ENCODE measurements at regions of chr12 and their contacts with region 1.

Region 1: GRCh38 chr12:93061472-93062419 is 132.7 kb upstream of the EEA1 start:
- DNase-seq: no peak
- H3K4me3 ChIP-seq: no peak overlapping the region
- H3K27ac ChIP-seq: no peak overlapping the region
- H3K4me1 ChIP-seq: no peaks in the 10 kb centered on the region
- H3K27me3 ChIP-seq: no peaks in the 10 kb centered on the region
- CTCF ChIP-seq: no peak

Region 2: DNA sequence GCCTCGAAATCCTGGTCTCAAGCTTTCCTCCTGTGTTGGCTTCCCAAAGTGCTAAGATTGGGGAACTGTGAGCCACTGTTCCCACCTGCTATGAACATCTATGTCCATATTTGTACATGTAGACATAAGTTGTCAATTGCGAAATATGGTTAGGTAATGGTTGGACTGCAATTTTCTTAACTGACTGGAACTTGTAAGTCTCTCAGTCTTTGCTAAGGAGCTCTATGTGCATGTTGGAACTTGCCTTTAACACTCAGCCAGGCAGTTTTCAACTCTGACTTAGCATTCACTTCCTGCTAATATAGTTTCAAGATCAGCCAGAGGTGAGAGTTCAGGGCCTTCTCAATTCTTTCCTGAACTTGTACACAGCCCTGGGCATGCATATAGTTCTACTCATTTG is 88.1 kb before region 1 on chr12:
- CTCF ChIA-PET with region 1: no interaction called
- POLR2A ChIA-PET with region 1: no interaction called
- intact Hi-C with region 1: no loop called
- DNase-seq: peak in 1 of 2 experiments; percentile 65
- H3K4me3 ChIP-seq: no peak overlapping the region
- H3K27ac ChIP-seq: no peak overlapping the region
- H3K4me1 ChIP-seq: peaks cover 22% of the 10 kb centered on the region
- H3K27me3 ChIP-seq: no peaks in the 10 kb centered on the region
- CTCF ChIP-seq: no peak

Region 3: DNA sequence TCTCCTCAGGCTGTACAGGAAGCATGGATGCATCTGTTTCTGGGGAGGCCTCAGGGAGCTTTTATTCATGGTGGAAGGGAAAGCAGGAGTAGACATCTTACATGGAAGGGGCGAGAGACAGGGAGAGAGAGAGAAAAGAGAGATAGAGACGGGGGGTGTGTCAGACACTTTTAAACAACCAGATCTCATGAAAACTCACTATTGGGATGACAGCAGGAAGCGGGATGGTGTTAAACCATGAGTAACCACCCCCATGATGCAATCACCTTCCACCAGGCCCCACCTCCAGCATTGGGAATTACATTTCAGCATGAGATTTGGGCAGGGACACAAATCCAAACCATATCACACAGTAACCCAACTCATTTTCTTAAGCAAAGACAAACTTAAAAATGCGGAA is 22.7 kb before region 1 on chr12:
- CTCF ChIA-PET with region 1: no interaction called
- POLR2A ChIA-PET with region 1: no interaction called
- intact Hi-C with region 1: no loop called
- DNase-seq: no peak
- H3K4me3 ChIP-seq: no peak overlapping the region
- H3K27ac ChIP-seq: no peak overlapping the region
- H3K4me1 ChIP-seq: no peaks in the 10 kb centered on the region
- H3K27me3 ChIP-seq: no peaks in the 10 kb centered on the region
- CTCF ChIP-seq: no peak

Region 4: GRCh38 chr12:93050026-93050747 is 11.6 kb before region 1 on chr12:
- CTCF ChIA-PET with region 1: no interaction called
- POLR2A ChIA-PET with region 1: interaction called, 11 read pairs
- intact Hi-C with region 1: no loop called
- DNase-seq: peak in 1 of 2 experiments; percentile 59
- H3K4me3 ChIP-seq: no peak overlapping the region
- H3K27ac ChIP-seq: no peak overlapping the region
- H3K4me1 ChIP-seq: peaks cover 13% of the 10 kb centered on the region
- H3K27me3 ChIP-seq: no peaks in the 10 kb centered on the region
- CTCF ChIP-seq: no peak

Measured in PC-9 (cell line).